ENCODE measurements at regions of chr11 and their contacts with region 1.

Region 1: DNA sequence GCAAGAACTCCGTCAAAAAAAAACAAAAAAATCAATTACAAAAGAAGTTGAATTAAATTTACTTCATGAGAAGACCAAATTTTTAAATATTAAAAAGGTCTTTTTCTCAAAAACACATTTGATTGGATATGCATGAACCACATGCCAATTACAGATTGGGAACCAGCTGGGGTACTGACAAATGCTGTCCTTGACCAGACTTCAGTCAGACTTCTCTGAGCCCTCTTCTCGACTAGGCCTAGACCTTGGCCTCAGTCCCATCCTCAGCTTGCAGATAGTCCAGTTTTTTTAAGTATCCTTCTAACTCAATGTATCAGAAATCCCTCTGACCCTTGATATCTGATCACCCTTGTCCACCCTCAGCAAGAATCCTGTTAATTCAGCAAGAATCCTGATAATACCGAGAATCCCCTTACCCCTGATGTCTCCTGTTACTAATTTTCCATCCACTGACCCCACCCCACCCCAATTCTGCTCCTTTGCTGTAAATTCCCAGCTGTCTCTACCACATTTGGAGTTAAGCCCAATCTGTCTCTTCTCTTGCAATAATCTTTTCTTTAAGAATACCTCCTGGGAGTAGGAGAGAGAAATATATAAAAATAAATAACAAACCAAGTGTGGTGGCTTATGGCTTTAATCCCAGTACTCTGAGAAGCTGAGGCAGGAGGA is 30.9 kb downstream of the OR4D9 start:
- DNase-seq: no peak
- ATAC-seq: no peak
- H3K4me3 ChIP-seq: no peak overlapping the region
- H3K27ac ChIP-seq: no peak overlapping the region
- H3K4me1 ChIP-seq: peaks cover 12% of the 10 kb centered on the region
- H3K27me3 ChIP-seq: no peaks in the 10 kb centered on the region
- CTCF ChIP-seq: no peak

Region 2: DNA sequence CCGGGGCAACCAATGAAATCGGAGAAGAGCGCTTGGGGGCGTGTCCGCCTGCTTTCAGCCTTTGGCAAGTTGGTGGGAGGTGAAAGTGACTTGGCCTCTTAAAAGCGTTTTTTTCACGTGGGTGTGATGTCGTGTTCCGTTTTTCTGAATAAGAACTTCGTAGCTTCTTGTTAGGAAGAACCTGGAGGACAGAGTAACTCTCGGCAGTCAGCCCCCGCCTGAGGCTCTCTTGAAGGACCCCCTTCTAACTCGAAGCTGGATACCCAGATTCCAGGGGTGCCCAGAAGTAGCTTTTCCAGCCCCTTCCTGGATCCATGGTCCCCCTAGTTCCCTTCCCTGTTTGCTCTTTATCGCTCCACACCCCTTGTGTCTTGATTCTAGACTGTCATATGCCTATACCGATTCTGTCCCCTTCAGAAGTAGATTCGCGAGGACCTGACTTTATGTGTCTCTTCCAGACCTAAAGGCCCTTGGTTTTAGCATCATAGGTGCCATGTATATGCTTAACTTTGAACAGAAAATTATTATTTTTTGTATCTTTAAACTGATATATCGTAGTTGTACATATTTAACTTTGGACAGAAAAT is 74.2 kb after region 1 on chr11:
- CTCF ChIA-PET with region 1: no interaction called
- POLR2A ChIA-PET with region 1: no interaction called
- in situ Hi-C with region 1: no loop called
- intact Hi-C with region 1: no loop called
- DNase-seq: peak; percentile 4
- ATAC-seq: no peak
- H3K4me3 ChIP-seq: peak overlapping the region; percentile 94 to 98
- H3K27ac ChIP-seq: peak overlapping the region; percentile 88
- H3K4me1 ChIP-seq: peaks cover 32% of the 10 kb centered on the region
- H3K27me3 ChIP-seq: no peaks in the 10 kb centered on the region
- CTCF ChIP-seq: no peak

Region 3: GRCh38 chr11:59680287-59681154 is 138.2 kb after region 1 on chr11:
- CTCF ChIA-PET with region 1: no interaction called
- POLR2A ChIA-PET with region 1: no interaction called
- in situ Hi-C with region 1: no loop called
- intact Hi-C with region 1: loop called (anchors 2 kb)
- DNase-seq: peak; percentile 51
- ATAC-seq: peak; percentile 100
- H3K4me3 ChIP-seq: no peak overlapping the region
- H3K27ac ChIP-seq: no peak overlapping the region
- H3K4me1 ChIP-seq: no peaks in the 10 kb centered on the region
- H3K27me3 ChIP-seq: no peaks in the 10 kb centered on the region
- CTCF ChIP-seq: peak; percentile 87

Region 4: DNA sequence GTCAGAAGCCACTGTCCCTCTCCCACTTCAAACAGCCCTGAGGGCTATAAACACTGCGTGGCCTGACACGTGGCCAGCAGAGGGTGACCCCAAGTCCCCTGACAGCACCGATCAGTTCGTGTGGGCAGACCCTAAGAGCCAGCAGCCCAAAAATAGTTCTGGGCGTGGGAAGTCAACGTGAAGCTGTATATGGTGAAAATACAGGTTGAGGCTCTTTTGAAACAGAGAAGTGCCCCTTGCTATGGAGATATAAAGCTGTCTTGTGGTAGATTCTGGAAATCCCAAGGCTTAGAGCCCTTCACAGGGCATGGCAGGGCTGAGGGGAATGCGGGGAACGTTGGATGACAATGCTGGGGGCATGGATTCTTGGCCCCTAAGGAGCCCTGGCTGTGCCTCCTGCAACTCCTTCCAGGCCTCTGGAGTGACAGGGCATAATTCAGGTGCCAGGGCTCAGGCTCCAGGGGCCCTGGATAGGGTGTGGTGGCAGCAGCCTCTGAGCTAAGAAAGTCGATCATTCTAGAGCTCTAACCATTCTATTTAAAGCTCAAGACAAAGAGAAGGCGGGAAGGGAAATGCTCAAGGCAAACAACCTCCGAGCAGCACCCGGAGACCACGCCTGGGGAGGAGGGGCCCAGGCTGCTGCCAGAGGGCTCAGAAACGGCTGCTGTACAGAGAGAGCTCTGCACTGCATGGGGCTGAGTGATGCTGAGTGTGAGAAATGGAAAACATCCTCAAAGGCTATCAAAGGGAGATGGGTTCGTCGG is 1499.7 kb after region 1 on chr11:
- CTCF ChIA-PET with region 1: no interaction called
- POLR2A ChIA-PET with region 1: no interaction called
- in situ Hi-C with region 1: no loop called
- intact Hi-C with region 1: no loop called
- DNase-seq: no peak
- ATAC-seq: peak; percentile 77; the same call in 1 of the 2 replicates
- H3K4me3 ChIP-seq: no peak overlapping the region
- H3K27ac ChIP-seq: no peak overlapping the region
- H3K4me1 ChIP-seq: no peaks in the 10 kb centered on the region
- H3K27me3 ChIP-seq: no peaks in the 10 kb centered on the region; the same call in 1 of the 2 replicates
- CTCF ChIP-seq: no peak

Measured in Panc1 (cell line).